Sigmoid colon (tissue), 7 donors: ENCODE measurements at regions of chr5 and their contacts with region 1.

Region 1: GRCh38 chr5:124649491-124650146 is 96.8 kb downstream of the ZNF608 start:
- DNase-seq: no peak
- H3K4me3 ChIP-seq: peak overlapping the region in 1 of 4 donors; percentile 9
- H3K27ac ChIP-seq: peak overlapping the region; percentile 83 to 93 (median 86)
- H3K4me1 ChIP-seq: peaks cover 0 to 60% (median 57%) of the 10 kb centered on the region in 4 donors
- H3K27me3 ChIP-seq: no peaks in the 10 kb centered on the region
- CTCF ChIP-seq: no peak
- EP300 ChIP-seq: no peak
- POLR2A ChIP-seq: no peak

Region 2: GRCh38 chr5:124330595-124331220 is 318.9 kb before region 1 on chr5:
- intact Hi-C with region 1: no loop called
- DNase-seq: no peak
- H3K4me3 ChIP-seq: no peak overlapping the region
- H3K27ac ChIP-seq: no peak overlapping the region
- H3K4me1 ChIP-seq: no peaks in the 10 kb centered on the region
- H3K27me3 ChIP-seq: no peaks in the 10 kb centered on the region
- CTCF ChIP-seq: no peak
- EP300 ChIP-seq: no peak
- POLR2A ChIP-seq: no peak

Region 3: GRCh38 chr5:124524552-124525232 is 124.9 kb before region 1 on chr5:
- intact Hi-C with region 1: loop called (anchors 2 kb)
- DNase-seq: no peak
- H3K4me3 ChIP-seq: no peak overlapping the region
- H3K27ac ChIP-seq: no peak overlapping the region
- H3K4me1 ChIP-seq: peaks cover 0 to 24% (median 16%) of the 10 kb centered on the region in 4 donors
- H3K27me3 ChIP-seq: no peaks in the 10 kb centered on the region
- CTCF ChIP-seq: no peak
- EP300 ChIP-seq: no peak
- POLR2A ChIP-seq: no peak

Region 4: DNA sequence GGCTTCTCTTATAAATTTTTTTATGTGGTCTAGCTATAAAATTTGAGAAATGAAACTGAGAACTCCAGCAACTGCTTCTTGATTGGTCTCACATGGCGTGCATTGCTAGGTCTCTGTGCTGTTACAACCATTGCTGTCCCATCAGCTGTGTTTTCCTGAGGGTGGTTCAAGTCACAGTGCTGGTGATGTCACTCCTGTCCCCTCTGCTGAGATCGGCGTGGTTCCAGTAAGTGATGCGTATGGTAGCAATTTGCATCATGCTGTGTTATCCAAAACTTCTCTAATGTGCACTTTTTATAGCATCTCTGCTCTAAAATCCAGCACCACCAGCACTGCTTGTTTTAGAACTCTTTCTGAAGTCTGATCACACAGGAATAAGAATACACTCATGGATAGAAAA is 209.4 kb after region 1 on chr5:
- intact Hi-C with region 1: no loop called
- DNase-seq: no peak
- H3K4me3 ChIP-seq: no peak overlapping the region
- H3K27ac ChIP-seq: no peak overlapping the region
- H3K4me1 ChIP-seq: no peaks in the 10 kb centered on the region
- H3K27me3 ChIP-seq: no peaks in the 10 kb centered on the region
- CTCF ChIP-seq: no peak
- EP300 ChIP-seq: no peak
- POLR2A ChIP-seq: no peak

Region 5: GRCh38 chr5:124902097-124902821 is 252.6 kb after region 1 on chr5:
- intact Hi-C with region 1: loop called (anchors 10 kb)
- DNase-seq: no peak
- H3K4me3 ChIP-seq: no peak overlapping the region
- H3K27ac ChIP-seq: peak overlapping the region in 1 of 4 donors; percentile 25
- H3K4me1 ChIP-seq: peaks cover 0 to 27% (median 20%) of the 10 kb centered on the region in 4 donors
- H3K27me3 ChIP-seq: no peaks in the 10 kb centered on the region
- CTCF ChIP-seq: no peak
- EP300 ChIP-seq: no peak
- POLR2A ChIP-seq: no peak

Region 6: GRCh38 chr5:125412561-125413495 is 763.2 kb after region 1 on chr5:
- intact Hi-C with region 1: loop called (anchors 10 kb)
- DNase-seq: peak; percentile 82
- H3K4me3 ChIP-seq: peak overlapping the region in 1 of 4 donors; percentile 1
- H3K27ac ChIP-seq: peak overlapping the region; percentile 66 to 84 (median 74)
- H3K4me1 ChIP-seq: peaks cover 0 to 64% (median 60%) of the 10 kb centered on the region in 4 donors
- H3K27me3 ChIP-seq: no peaks in the 10 kb centered on the region
- CTCF ChIP-seq: peak in 1 of 4 experiments; percentile 24
- EP300 ChIP-seq: peak in 1 of 4 donors; percentile 53
- POLR2A ChIP-seq: no peak

Region 7: DNA sequence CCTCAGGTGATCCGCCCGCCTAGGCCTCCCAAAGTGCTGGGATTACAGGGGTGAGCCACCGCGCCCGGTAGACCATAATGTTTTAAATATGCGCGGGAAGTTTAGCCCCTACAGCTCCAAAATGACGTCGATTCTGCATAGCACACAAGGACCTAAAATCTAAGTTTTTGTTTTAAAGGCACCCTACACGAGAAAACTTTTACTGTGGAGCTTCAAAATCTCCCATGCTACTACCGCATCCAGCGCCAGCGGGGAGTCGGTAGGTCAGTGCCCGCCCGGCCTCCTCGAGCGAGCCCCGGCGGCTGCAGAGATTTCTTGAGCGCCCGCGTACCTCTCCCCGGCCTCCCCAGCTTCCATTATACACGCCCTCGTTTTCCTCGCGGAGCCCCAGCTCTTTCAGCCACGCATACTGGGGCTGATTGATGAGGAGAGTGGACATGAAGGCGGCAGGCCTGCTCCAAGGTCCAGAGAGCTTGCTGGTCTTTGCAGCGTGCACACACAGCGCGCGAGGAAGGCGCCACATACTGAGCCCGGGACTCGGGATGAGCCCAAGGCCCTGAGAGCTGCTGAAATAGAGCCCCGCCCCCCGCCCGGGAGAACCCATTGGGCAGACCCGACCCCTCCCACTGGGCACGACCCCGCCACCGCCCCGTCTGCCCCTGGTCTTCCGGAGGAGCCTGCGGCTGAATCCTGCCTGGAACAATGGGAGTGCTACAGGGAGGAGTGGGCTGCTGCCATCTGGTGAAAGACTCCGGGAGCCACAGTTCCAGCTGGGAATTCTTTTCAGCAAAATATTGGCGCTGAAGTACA is 1945.3 kb after region 1 on chr5 and contains the start of gene ALDH7A1:
- intact Hi-C with region 1: loop called (anchors 5 kb)
- DNase-seq: peak; percentile 93
- H3K4me3 ChIP-seq: peak within 1 kb of the TSS; percentile 41 to 70 (median 67)
- H3K27ac ChIP-seq: peak within 1 kb of the TSS; percentile 82 to 85 (median 83)
- H3K4me1 ChIP-seq: peaks cover 0 to 23% (median 13%) of the 10 kb centered on the region in 4 donors
- H3K27me3 ChIP-seq: no peaks in the 10 kb centered on the region
- CTCF ChIP-seq: peak in 2 of 4 experiments; percentile 15 to 42
- EP300 ChIP-seq: no peak
- POLR2A ChIP-seq: peak in 1 of 2 donors; percentile 18
- total RNA-seq, gene ALDH7A1: 16.0 to 22.2 (median 17.8) TPM